ENCODE measurements at regions of chr6 and their contacts with region 1.

Region 1: GRCh38 chr6:70706491-70707123 is 38.9 kb downstream of the SMAP1 start:
- DNase-seq: no peak

Region 2: DNA sequence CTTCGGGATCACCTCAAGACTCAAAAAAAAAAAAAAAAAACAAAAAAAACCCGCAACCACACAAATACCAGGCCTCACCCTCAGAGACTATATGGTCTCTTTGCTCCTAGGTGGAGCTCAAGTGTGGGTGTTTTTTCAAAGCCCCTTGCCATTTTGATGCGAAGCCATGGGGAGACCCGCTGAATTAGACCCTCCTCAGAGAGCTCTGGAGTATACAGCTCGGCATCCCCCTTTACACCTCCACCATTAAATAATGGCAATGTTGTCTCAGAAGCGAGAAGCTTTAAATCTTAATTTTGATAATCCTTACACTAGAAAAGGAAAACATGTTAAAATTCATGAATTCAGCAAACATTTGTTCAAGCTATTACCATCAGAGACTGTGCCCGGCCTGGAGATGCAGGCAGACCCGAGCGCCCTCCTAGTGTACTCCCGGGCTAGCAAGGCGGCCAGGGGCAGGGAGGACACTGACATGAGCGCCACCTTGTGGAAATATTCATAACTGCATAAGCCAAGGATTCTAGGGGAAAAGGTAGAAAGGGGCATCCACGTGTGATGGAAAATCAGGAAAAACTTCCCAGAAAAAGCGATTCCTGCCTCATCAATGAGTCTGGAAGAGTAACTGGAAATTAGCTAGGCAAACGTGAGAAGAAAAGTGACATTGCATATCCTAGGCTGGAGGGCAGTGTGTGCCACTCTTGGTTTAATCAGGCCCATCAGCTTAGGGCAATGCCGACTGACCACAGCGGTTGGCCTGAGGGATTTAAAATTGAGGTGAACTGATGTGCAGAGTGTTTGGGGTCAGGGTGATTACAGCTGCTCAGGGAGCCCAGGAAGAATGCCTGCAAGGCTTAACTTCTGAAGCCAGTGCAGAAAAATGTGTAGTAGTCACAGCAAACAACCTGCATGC is 177.7 kb after region 1 on chr6:
- intact Hi-C with region 1: loop called (anchors 1 kb)
- DNase-seq: peak in 7 of 10 donors; percentile 36 to 89 (median 56)

Region 3: DNA sequence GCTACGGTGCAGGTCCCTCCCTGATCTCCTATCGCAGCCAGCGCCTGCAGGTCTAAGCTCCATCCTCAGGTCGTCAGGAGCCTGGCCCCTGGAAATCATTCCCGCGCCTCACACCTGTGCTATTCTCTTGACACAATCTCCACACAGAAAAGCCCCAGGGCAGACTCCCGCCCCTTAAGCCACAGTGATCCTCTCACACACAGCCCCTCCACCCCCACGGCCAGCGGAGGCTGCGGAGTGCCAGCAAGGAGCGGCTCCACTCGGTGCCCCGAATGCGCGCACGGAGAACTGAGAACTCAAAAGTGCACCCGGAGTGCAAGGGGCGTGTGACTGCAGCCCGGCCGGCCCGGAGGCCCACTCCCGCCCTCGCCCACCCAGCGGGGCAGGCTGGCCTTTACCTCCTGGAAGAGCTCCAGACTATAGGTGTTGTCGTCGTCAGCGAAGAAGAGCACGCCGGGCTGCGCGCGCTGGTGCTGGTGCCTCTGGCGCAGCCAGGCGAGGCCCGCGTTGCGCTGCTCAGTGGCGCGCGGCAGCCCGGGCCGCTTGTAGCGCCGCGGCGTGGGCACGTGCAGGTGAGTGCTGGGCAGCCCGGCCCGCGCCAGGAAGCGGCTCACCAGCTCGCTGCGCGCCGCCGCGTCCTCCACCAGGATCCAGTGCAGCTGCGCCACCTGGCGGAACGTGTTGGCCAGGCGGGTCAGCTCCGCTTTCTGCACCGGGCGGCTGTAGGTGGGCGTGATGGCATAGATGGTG is 249.0 kb after region 1 on chr6:
- intact Hi-C with region 1: loop called (anchors 5 kb)
- DNase-seq: peak; percentile 72 to 97 (median 88)

Region 4: DNA sequence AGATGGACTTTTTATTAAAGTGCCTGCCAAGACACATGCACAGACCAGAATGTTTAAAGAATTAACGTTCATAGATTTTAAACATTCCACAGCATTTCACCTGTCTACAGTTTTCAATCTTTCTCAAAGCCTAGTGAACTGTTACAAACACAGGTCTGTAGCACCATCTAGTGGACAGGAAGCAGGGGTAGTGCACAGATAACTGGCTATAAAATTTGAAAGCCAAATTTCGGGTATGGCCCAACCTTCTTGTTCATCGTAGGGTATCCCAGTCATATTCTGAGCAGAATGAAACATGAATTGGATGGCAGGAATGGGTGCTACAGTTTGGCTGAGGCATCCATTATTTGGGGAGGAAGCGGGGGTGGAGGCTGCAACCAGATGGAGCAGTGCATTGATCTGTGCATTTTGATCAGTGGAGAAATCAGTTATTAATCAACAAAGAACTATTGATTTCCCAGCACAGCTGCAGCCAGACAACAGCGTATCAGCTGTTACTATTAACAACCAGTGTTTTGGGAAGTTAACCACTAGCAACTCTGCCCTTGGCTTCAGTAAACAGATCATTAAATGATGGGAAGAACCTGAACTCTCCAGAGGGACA is 306.4 kb after region 1 on chr6:
- intact Hi-C with region 1: loop called (anchors 2 kb)
- DNase-seq: peak in 1 of 10 donors; percentile 11